ENCODE measurements at regions of chr11 and their contacts with region 1.

Region 1: DNA sequence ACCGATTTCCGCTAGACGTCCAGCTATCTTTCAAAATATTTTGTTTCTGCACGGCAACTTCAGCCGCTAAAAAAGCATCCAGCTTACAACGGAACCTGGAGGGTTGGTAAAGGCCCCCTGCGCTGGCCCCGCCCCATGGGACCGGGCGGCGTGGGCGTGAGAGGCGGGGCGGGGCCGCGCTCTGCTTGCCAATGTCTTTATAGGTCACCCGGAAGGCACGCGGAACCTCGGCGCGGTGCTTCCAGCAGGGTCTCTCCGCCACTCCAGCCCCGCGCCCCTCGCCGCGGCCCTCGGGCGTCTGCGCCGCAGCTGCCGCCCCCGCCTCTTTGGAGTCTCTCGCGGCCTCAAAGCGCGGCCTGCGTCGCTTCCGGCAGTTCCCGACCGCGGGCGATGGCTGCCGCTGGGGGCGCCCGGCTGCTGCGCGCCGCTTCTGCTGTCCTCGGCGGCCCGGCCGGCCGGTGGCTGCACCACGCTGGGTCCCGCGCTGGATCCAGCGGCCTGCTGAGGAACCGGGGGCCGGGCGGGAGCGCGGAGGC is at the start of gene FDX1:
- DNase-seq: peak; percentile 77 to 82
- ATAC-seq: peak; percentile 91 to 97 (median 93)
- H3K4me3 ChIP-seq: peak within 1 kb of the TSS; percentile 55 to 94 (median 88)
- H3K27ac ChIP-seq: peak within 1 kb of the TSS; percentile 84 to 96 (median 94)
- H3K4me1 ChIP-seq: peaks cover 0 to 44% (median 36%) of the 10 kb centered on the region in 9 donors
- H3K27me3 ChIP-seq: no peaks in the 10 kb centered on the region
- CTCF ChIP-seq: peak; percentile 43 to 90 (median 79)
- total RNA-seq, gene FDX1: 18.4 to 30.3 (median 22.0) TPM

Region 2: GRCh38 chr11:109960831-109961230 is 469.0 kb before region 1 on chr11:
- intact Hi-C with region 1: loop called in 1 of 10 experiments (anchors 10 kb)
- DNase-seq: peak; percentile 49 to 61
- ATAC-seq: peak; percentile 71 to 95 (median 88)
- H3K4me3 ChIP-seq: no peak overlapping the region
- H3K27ac ChIP-seq: peak overlapping the region in 1 of 10 donors; percentile 49
- H3K4me1 ChIP-seq: peaks cover 0 to 11% (median 0%) of the 10 kb centered on the region in 9 donors
- H3K27me3 ChIP-seq: no peaks in the 10 kb centered on the region
- CTCF ChIP-seq: no peak

Region 3: DNA sequence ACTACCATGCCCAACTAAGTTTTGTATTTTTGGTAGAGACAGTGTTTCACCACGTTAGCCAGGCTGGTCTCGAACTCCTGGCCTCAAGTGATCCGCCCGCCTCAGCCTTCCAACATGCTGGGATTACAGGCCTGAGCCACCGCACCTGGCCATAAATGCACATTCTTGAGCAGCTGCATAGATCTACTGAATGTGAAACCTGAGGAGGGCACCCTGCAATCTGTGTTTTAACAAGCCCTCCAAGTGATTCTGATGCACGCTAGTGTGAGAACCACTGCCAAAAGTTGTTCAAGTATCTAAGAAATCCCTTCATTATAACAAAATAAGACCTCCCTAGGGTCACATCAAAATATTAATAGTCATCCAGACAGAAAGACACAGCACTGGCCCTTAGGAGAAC is 222.7 kb before region 1 on chr11:
- intact Hi-C with region 1: loop called in 3 of 10 experiments (anchors 5 kb)
- DNase-seq: no peak
- ATAC-seq: no peak
- H3K4me3 ChIP-seq: no peak overlapping the region
- H3K27ac ChIP-seq: no peak overlapping the region
- H3K4me1 ChIP-seq: no peaks in the 10 kb centered on the region
- H3K27me3 ChIP-seq: no peaks in the 10 kb centered on the region
- CTCF ChIP-seq: no peak

Region 4: DNA sequence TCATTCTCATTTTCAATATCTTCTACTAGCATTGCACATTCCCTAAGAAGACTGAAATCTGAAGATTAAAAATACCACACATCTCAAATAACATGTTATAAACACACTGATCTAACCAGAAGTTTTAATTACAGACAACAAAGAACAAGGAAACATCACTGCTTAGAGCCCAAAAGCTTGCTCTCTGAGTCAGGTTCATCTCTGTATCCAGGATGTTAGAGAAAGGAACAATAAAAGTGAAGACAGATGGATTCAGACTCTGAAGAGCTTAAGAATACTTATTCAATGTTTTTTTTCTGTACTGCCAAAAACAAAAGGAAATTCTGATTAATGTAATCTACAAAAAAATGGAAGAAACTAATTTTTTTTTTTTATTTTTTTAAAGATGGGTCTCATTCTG is 149.9 kb before region 1 on chr11:
- intact Hi-C with region 1: no loop called
- DNase-seq: no peak
- ATAC-seq: no peak
- H3K4me3 ChIP-seq: no peak overlapping the region
- H3K27ac ChIP-seq: no peak overlapping the region
- H3K4me1 ChIP-seq: peaks cover 0 to 35% (median 0%) of the 10 kb centered on the region in 9 donors
- H3K27me3 ChIP-seq: no peaks in the 10 kb centered on the region
- CTCF ChIP-seq: no peak

Region 5: GRCh38 chr11:110376711-110377324 is 53.0 kb before region 1 on chr11:
- intact Hi-C with region 1: loop called in 8 of 10 experiments (anchors 2 to 5 kb)
- DNase-seq: peak; percentile 51 to 85
- ATAC-seq: peak; percentile 68 to 92 (median 86)
- H3K4me3 ChIP-seq: peak overlapping the region in 4 of 10 donors; percentile 12 to 23 (median 20)
- H3K27ac ChIP-seq: peak overlapping the region in 7 of 10 donors; percentile 2 to 60 (median 34)
- H3K4me1 ChIP-seq: peaks cover 0 to 36% (median 13%) of the 10 kb centered on the region in 9 donors
- H3K27me3 ChIP-seq: no peaks in the 10 kb centered on the region
- CTCF ChIP-seq: peak; percentile 63 to 93 (median 83)

Region 6: DNA sequence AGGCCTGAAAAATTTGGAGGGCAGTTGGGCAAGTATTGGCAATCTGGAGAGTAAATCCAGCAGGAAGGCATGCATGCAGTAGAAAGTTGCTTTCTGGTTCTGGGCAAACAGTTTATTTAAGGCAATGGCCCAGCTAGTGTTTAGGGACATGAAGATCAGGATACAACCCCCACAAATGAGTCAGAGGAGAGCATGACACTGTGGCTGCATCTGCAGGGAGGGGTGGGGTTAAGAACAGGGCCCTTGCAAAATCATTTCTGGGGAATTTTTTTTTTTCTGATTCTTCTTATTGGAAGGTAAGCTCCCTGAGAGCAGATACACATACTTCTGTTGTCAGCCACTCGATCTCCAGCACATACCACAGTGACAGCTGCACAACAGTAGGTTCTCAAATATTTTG is 61.1 kb after region 1 on chr11:
- intact Hi-C with region 1: no loop called
- DNase-seq: no peak
- ATAC-seq: peak in 1 of 8 donors; percentile 85
- H3K4me3 ChIP-seq: no peak overlapping the region
- H3K27ac ChIP-seq: peak overlapping the region in 1 of 10 donors; percentile 8
- H3K4me1 ChIP-seq: peaks cover 0 to 22% (median 0%) of the 10 kb centered on the region in 9 donors
- H3K27me3 ChIP-seq: peaks cover 0 to 3% (median 0%) of the 10 kb centered on the region in 7 donors
- CTCF ChIP-seq: no peak

Region 7: GRCh38 chr11:110812086-110812733 is 382.4 kb after region 1 on chr11:
- intact Hi-C with region 1: no loop called
- DNase-seq: no peak
- ATAC-seq: no peak
- H3K4me3 ChIP-seq: no peak overlapping the region
- H3K27ac ChIP-seq: no peak overlapping the region
- H3K4me1 ChIP-seq: no peaks in the 10 kb centered on the region
- H3K27me3 ChIP-seq: no peaks in the 10 kb centered on the region
- CTCF ChIP-seq: no peak